Thyroid gland (tissue), 4 donors: ENCODE measurements at regions of chr20 and their contacts with region 1.

Region 1: GRCh38 chr20:22339091-22339881 is 245.1 kb downstream of the FOXA2 start:
- DNase-seq: peak; percentile 37 to 48
- H3K4me3 ChIP-seq: no peak overlapping the region
- H3K27ac ChIP-seq: no peak overlapping the region
- H3K4me1 ChIP-seq: no peaks in the 10 kb centered on the region
- H3K27me3 ChIP-seq: no peaks in the 10 kb centered on the region
- CTCF ChIP-seq: peak; percentile 51 to 89 (median 72)
- POLR2A ChIP-seq: no peak

Region 2: GRCh38 chr20:21272279-21272678 is 1067.0 kb before region 1 on chr20:
- intact Hi-C with region 1: no loop called
- DNase-seq: no peak
- H3K4me3 ChIP-seq: no peak overlapping the region
- H3K27ac ChIP-seq: no peak overlapping the region
- H3K4me1 ChIP-seq: no peaks in the 10 kb centered on the region
- H3K27me3 ChIP-seq: no peaks in the 10 kb centered on the region
- CTCF ChIP-seq: no peak
- POLR2A ChIP-seq: no peak

Region 3: GRCh38 chr20:22586645-22587310 is 247.5 kb after region 1 on chr20:
- intact Hi-C with region 1: loop called (anchors 5 kb)
- DNase-seq: peak; percentile 61 to 79
- H3K4me3 ChIP-seq: peak overlapping the region in 1 of 3 donors; percentile 22
- H3K27ac ChIP-seq: peak overlapping the region in 2 of 3 donors; percentile 70 to 87
- H3K4me1 ChIP-seq: peaks cover 14 to 27% of the 10 kb centered on the region in 2 donors
- H3K27me3 ChIP-seq: no peaks in the 10 kb centered on the region
- CTCF ChIP-seq: peak in 5 of 6 experiments; percentile 58 to 83 (median 72)
- POLR2A ChIP-seq: peak in 1 of 2 donors; percentile 76

Region 4: GRCh38 chr20:22684072-22684762 is 344.9 kb after region 1 on chr20:
- intact Hi-C with region 1: loop called (anchors 5 kb)
- DNase-seq: peak; percentile 76 to 78
- H3K4me3 ChIP-seq: no peak overlapping the region
- H3K27ac ChIP-seq: peak overlapping the region in 2 of 3 donors; percentile 25 to 48
- H3K4me1 ChIP-seq: peaks cover 17 to 36% of the 10 kb centered on the region in 2 donors
- H3K27me3 ChIP-seq: no peaks in the 10 kb centered on the region
- CTCF ChIP-seq: peak; percentile 72 to 96 (median 90)
- POLR2A ChIP-seq: no peak